Naive thymus-derived CD4-positive, alpha-beta T cell (primary cell): ENCODE measurements at regions of chr9 and their contacts with region 1.

Region 1: GRCh38 chr9:129898191-129898590 is 62.9 kb downstream of the USP20 start:
- DNase-seq: no peak
- ATAC-seq: no peak
- H3K4me3 ChIP-seq: no peak overlapping the region
- H3K4me3 Mint-ChIP-seq: peak overlapping the region in 2 of 10 donors; percentile 23 to 28
- H3K27ac ChIP-seq: peak overlapping the region; percentile 16
- H3K27ac Mint-ChIP-seq: peak overlapping the region; percentile 56 to 97 (median 88)
- H3K4me1 ChIP-seq: peaks cover 26 to 30% of the 10 kb centered on the region in 2 donors
- H3K4me1 Mint-ChIP-seq: peaks cover 26 to 70% (median 57%) of the 10 kb centered on the region in 7 donors
- H3K27me3 ChIP-seq: no peaks in the 10 kb centered on the region
- H3K27me3 Mint-ChIP-seq: no peaks in the 10 kb centered on the region

Region 2: DNA sequence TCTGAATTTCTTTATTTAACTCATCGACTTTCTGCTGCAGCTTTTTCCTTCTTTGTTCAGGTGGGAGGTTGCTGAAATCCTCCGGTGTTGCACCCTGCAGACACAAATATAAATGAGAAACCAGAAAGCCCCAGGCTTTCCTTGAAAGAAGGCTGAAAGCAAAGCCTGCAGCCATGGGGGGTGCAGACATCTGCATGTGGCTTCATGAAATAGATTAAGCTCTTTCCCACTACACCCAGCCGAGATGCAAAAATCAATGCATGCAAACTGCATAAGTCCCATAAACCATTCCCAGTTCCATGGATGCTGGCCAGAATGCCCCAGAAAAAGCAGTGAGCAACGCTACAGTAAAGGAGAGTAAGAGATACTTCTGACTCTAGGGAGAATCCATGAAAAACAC is 10.7 kb after region 1 on chr9:
- CTCF ChIA-PET with region 1: interaction called, 3 read pairs
- POLR2A ChIA-PET with region 1: interaction called, 5 read pairs
- intact Hi-C with region 1: loop called in 1 of 2 experiments (anchors 2 kb)
- DNase-seq: no peak
- ATAC-seq: no peak
- H3K4me3 ChIP-seq: no peak overlapping the region
- H3K4me3 Mint-ChIP-seq: no peak overlapping the region
- H3K27ac ChIP-seq: no peak overlapping the region
- H3K27ac Mint-ChIP-seq: peak overlapping the region in 7 of 9 donors; percentile 56 to 90 (median 83)
- H3K4me1 ChIP-seq: no peaks in the 10 kb centered on the region
- H3K4me1 Mint-ChIP-seq: peaks cover 8 to 41% (median 30%) of the 10 kb centered on the region in 7 donors
- H3K27me3 ChIP-seq: no peaks in the 10 kb centered on the region
- H3K27me3 Mint-ChIP-seq: no peaks in the 10 kb centered on the region